ENCODE measurements at regions of chr17 and their contacts with region 1.

Region 1: DNA sequence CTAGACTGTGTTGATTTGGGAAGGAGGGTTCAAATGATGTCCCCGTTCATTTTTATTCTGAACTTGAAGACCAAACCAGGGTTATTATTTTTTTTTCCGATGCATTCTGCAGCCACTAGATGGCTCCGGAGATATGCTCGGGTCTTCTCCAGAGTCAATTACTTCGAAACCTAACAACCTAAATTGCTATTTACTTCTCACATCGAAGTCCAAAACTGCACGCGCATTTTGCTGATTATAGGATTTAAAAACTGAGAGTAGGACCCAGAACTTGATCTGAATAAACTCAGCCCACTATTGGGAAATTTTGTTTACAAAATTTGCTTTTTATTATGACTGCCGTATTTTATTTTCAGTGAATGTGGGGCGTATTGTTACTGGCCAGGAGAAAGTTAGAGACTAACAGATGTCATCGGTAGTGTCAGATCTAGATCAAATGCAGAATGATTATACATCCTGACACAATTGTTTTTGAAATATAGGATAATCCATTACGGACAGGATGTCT is 263.8 kb downstream of the HS3ST3A1 start:
- DNase-seq: peak in 6 of 7 donors; percentile 28 to 64 (median 38)
- H3K4me3 ChIP-seq: peak overlapping the region in 1 of 4 donors; percentile 49
- H3K27ac ChIP-seq: no peak overlapping the region
- H3K4me1 ChIP-seq: no peaks in the 10 kb centered on the region
- H3K27me3 ChIP-seq: no peaks in the 10 kb centered on the region
- CTCF ChIP-seq: peak; percentile 66 to 78 (median 71)
- POLR2A ChIP-seq: no peak

Region 2: DNA sequence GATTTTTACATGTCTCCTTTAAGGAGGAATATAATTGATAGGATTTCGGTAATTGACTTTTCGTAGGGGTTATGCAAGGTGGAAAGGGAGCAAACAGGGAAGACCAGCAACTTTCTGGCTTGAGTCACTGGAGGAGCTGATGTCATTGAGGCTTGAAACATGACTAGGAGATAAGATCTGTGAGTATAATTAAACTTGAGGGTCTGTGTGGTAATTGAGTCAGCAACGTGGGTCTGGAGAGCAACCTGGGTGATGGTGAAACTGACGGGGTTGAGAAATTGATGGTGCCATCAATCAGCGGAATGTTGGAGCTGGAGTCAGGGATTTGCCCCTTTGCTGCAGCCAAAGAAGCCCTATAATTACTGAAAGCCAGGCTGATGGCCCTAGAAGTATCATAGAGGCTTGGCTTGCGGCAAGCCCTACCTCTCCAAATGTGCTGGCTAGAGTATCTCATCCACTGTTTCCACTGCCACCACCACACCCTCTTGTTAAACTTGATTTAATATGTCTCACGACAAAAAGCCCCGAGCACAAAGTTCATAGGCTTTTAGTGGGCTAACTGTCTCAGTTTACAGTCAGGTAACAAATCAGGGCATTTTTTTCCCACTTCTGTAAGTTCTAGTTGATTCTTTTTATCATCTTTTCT is 133.2 kb before region 1 on chr17:
- intact Hi-C with region 1: no loop called
- DNase-seq: no peak
- H3K4me3 ChIP-seq: no peak overlapping the region
- H3K27ac ChIP-seq: no peak overlapping the region
- H3K4me1 ChIP-seq: no peaks in the 10 kb centered on the region
- H3K27me3 ChIP-seq: no peaks in the 10 kb centered on the region
- CTCF ChIP-seq: no peak
- POLR2A ChIP-seq: no peak

Region 3: GRCh38 chr17:13253733-13254410 is 84.0 kb before region 1 on chr17:
- intact Hi-C with region 1: no loop called
- DNase-seq: no peak
- H3K4me3 ChIP-seq: no peak overlapping the region
- H3K27ac ChIP-seq: no peak overlapping the region
- H3K4me1 ChIP-seq: no peaks in the 10 kb centered on the region
- H3K27me3 ChIP-seq: no peaks in the 10 kb centered on the region
- CTCF ChIP-seq: no peak
- POLR2A ChIP-seq: no peak

Region 4: DNA sequence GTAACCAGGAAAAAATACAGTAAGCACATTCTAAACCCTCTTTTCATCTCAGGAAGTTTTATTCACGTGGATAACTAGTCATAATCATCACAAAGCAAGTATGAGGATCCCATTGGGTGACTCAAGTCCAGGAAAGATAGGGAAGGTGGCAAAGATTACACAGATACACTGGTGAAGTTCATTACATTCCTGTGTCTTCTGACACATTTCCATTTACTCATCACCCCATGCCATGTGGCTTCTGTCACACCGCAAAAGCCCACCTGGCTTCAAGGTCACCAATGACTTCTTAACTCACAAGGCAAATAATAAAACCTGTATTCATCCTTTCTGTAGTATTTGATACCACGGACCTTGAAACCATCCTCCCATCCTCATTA is 246.8 kb after region 1 on chr17:
- intact Hi-C with region 1: loop called in 1 of 2 experiments (anchors 10 kb)
- DNase-seq: no peak
- H3K4me3 ChIP-seq: no peak overlapping the region
- H3K27ac ChIP-seq: no peak overlapping the region
- H3K4me1 ChIP-seq: peaks cover 0 to 12% of the 10 kb centered on the region in 2 donors
- H3K27me3 ChIP-seq: no peaks in the 10 kb centered on the region
- CTCF ChIP-seq: no peak
- POLR2A ChIP-seq: no peak

Region 5: GRCh38 chr17:14300575-14301278 is 962.8 kb after region 1 on chr17 and contains the start of gene HS3ST3B1:
- intact Hi-C with region 1: loop called in 1 of 2 experiments (anchors 5 kb)
- DNase-seq: peak; percentile 95 to 99 (median 98)
- H3K4me3 ChIP-seq: peak within 1 kb of the TSS; percentile 37 to 64 (median 58)
- H3K27ac ChIP-seq: peak within 1 kb of the TSS in 4 of 5 donors; percentile 53 to 79 (median 61)
- H3K4me1 ChIP-seq: peaks cover 22 to 30% of the 10 kb centered on the region in 2 donors
- H3K27me3 ChIP-seq: peaks cover 39% of the 10 kb centered on the region
- CTCF ChIP-seq: peak in 3 of 6 experiments; percentile 32 to 44 (median 32)
- POLR2A ChIP-seq: peak; percentile 41 to 91
- total RNA-seq, gene HS3ST3B1: 2.4 to 8.5 (median 3.9) TPM